Heart right ventricle (tissue), 16 donors: ENCODE measurements at regions of chr6 and their contacts with region 1.

Region 1: DNA sequence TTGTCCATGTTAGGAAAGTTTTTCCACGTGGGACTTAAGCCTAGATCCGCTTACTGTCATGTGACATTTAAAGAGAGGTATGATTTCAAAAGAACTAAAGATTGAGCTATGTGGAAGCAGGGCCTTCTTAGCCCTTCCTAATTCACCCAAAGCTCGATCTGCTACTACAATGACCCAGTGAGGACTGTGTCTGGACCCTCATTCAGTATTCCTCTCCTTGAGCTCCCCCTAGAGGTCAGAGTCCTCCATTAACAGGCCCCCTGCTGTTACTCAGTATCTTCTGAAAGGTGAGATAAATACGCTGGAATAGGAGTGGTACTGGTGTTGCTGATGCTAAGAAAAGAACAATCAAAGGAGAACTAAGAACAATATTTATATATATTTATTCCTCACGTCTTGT is 414.0 kb downstream of the GJA1 start:
- DNase-seq: peak in 1 of 2 donors; percentile 79
- ATAC-seq: peak; percentile 88 to 96 (median 92)
- H3K4me3 ChIP-seq: no peak overlapping the region
- H3K27ac ChIP-seq: peak overlapping the region in 3 of 10 donors; percentile 16 to 60 (median 29)
- H3K4me1 ChIP-seq: peaks cover 0 to 30% (median 16%) of the 10 kb centered on the region in 9 donors
- H3K27me3 ChIP-seq: no peaks in the 10 kb centered on the region
- CTCF ChIP-seq: peak; percentile 66 to 88 (median 75)

Region 2: DNA sequence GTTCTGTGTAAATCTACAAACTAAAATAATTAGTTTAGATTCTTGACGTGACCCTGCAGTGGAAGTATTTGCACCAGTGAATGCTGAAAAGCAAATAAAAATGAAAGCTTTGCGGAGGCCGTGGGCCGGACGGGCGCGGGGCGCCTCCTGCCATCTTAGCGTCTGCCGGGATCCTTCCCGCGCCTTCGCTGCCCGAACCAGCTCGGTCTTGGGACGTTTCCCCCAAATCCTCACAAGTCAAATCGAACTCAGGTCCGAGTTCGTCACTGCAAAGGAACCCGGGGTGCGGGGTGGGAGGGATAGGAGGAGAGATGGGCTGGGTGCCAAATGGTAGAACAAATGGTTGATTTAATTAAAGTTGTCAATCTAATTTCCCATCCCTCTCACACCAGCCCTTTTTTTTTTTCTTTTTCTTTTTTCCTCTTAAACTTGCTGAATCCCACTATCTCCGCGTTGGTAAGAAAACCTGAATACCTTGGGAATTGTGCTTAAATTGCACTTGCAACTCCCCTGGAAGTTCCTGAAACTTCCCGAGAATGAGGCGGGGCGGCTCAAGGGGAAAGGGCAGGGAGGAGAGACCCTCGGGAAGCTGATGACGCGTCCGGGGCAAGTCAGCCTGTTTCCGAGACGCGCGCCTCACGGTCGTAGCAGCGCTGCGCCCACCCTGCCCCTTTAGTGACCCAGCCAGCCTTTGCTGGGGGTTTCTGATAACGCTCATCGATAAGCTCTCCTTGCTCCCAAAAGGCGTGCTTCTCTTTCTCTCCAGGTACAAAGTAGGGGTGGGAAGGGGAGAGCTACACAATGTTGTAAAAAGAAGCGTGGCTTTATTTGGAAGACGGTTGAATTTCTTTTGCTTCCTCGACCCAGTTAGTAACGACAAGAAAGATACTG is 412.3 kb before region 1 on chr6:
- intact Hi-C with region 1: loop called in 6 of 10 experiments (anchors 2 to 5 kb)
- DNase-seq: peak; percentile 50 to 53
- ATAC-seq: peak; percentile 56 to 72 (median 64)
- H3K4me3 ChIP-seq: peak overlapping the region; percentile 54 to 82 (median 72)
- H3K27ac ChIP-seq: peak overlapping the region; percentile 83 to 96 (median 90)
- H3K4me1 ChIP-seq: peaks cover 0 to 41% (median 18%) of the 10 kb centered on the region in 9 donors
- H3K27me3 ChIP-seq: peaks cover 0 to 35% (median 0%) of the 10 kb centered on the region in 7 donors
- CTCF ChIP-seq: no peak

Region 3: DNA sequence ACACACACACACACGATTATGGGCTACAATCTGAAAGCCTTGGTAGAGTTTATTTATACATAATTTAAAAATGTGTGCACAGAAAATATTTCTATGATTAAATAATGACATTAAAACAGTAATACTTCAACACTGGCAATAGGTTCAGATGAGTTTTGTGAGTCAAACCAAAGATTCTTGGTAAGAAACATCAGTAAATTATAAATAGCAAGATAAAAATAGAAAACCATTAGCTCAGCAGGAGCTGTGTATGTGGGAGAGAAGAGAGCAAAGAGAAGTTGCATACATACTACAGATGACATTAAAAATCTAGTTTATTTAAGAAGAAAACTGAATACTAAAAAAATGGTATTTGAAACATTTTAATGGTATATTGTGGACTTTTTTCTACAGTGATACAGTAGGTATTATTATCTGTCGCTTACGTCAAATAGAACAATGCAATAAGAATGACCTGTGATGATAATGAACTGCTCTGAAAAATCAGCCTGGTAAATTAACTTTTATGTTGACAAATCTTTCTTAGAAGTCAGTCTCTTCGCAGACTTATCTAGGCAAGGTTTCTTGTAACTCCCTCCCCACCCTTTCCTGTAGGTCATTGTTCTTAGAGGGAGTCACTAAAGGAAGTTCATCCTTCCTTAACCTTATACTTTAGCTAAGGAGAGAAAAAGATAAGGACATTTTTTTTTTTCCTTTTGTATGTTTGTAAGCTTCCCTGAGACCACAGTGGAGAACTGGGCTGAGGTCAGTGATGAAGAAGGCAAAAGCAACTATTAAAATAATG is 264.7 kb before region 1 on chr6:
- intact Hi-C with region 1: loop called in 1 of 10 experiments (anchors 10 kb)
- DNase-seq: no peak
- ATAC-seq: peak; percentile 16 to 82 (median 79)
- H3K4me3 ChIP-seq: no peak overlapping the region
- H3K27ac ChIP-seq: peak overlapping the region in 6 of 10 donors; percentile 26 to 59 (median 54)
- H3K4me1 ChIP-seq: peaks cover 0 to 26% (median 6%) of the 10 kb centered on the region in 9 donors
- H3K27me3 ChIP-seq: no peaks in the 10 kb centered on the region
- CTCF ChIP-seq: no peak

Region 4: GRCh38 chr6:121666814-121667213 is 182.7 kb before region 1 on chr6:
- intact Hi-C with region 1: loop called in 3 of 10 experiments (anchors 5 to 10 kb)
- DNase-seq: peak in 1 of 2 donors; percentile 21
- ATAC-seq: peak; percentile 77 to 98 (median 94)
- H3K4me3 ChIP-seq: no peak overlapping the region
- H3K27ac ChIP-seq: peak overlapping the region in 8 of 10 donors; percentile 41 to 77 (median 58)
- H3K4me1 ChIP-seq: peaks cover 0 to 20% (median 12%) of the 10 kb centered on the region in 9 donors
- H3K27me3 ChIP-seq: no peaks in the 10 kb centered on the region
- CTCF ChIP-seq: no peak

Region 5: DNA sequence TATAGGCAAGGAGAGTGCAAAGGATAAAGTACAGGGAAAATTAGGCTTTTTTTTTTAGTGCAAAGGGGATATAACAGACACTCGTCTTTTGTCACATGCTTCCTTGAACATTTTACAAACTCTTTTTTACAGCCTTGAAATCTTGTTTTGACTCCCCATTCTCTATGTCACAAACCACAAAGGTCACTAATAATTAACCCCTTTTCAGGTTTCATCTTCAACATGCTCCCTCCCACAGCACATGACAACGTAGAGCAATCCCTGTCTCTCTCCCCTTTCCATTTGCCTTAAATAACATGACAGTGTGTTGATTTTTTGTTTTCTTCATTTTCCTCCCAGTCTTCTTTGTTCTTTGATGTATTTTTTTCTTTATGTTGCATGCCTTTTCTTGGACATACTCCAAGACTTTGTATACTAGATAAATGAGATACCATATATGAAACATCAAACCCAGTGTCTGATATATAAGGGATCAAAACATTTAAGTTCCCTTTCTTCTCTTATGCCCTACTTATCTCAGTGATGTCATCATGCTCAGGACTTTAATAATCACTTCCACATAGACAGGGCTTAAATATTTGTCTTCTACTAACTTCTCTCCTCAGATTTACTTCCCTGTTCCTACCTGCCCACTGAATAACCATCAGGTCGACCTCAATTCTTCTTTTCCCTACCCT is 171.2 kb after region 1 on chr6:
- intact Hi-C with region 1: loop called in 3 of 10 experiments (anchors 10 kb)
- DNase-seq: no peak
- ATAC-seq: no peak
- H3K4me3 ChIP-seq: no peak overlapping the region
- H3K27ac ChIP-seq: no peak overlapping the region
- H3K4me1 ChIP-seq: no peaks in the 10 kb centered on the region
- H3K27me3 ChIP-seq: no peaks in the 10 kb centered on the region
- CTCF ChIP-seq: no peak